Calu3 (cell line): ENCODE measurements at regions of chr1 and their contacts with region 1.

Region 1: GRCh38 chr1:158203693-158204457 is 23.2 kb downstream of the CD1D start:
- DNase-seq: peak; percentile 41
- H3K4me3 Mint-ChIP-seq: no peak overlapping the region
- H3K27ac Mint-ChIP-seq: no peak overlapping the region
- H3K4me1 Mint-ChIP-seq: peaks cover 22% of the 10 kb centered on the region
- H3K27me3 Mint-ChIP-seq: peaks cover 17% of the 10 kb centered on the region
- CTCF ChIP-seq: peak; percentile 64

Region 2: DNA sequence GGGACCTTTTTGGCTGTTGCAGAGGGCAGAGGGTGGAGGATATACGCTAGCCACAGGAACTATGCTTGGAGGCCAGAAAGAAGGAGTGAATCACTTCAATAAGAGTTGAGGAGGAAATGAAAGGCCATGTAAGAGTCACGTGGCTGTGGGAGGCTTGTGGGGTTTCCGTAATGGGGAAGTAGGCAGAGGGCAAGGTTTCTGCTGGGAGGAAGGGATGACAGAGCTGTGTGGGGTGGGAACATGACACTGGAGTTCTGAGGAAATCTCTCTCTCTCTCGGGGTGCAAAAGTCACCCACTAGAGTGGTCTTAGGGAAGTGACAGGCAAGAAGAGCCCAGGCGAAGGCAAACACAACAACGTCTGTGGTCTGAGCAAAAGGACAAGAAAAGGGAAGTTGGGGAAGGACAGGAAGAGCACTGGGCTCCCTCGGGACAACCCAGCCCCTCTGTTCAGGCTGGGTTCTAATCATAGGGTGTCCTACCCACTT is 81.9 kb after region 1 on chr1:
- CTCF ChIA-PET with region 1: no interaction called
- intact Hi-C with region 1: loop called (anchors 10 kb)
- DNase-seq: peak; percentile 20
- H3K4me3 Mint-ChIP-seq: no peak overlapping the region
- H3K27ac Mint-ChIP-seq: peak overlapping the region; percentile 20
- H3K4me1 Mint-ChIP-seq: peaks cover 8% of the 10 kb centered on the region
- H3K27me3 Mint-ChIP-seq: no peaks in the 10 kb centered on the region
- CTCF ChIP-seq: no peak

Region 3: DNA sequence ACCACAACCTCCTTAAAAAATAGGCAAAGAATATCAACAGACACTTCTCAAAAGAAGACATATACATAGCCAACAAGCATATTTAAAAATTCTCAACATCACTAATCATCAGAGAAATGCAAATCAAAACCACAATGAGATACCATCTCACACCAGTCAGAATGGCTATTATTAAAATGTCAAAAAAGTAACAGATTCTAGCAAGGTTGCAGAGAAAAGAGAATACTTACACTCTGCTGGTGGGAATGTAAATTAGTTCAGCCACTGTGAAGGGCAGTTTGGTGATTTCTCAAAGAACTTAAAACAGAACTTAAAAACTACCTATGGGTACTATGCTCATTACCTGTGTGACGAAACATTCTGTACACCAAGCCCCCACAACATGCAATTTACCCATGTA is 106.7 kb after region 1 on chr1:
- CTCF ChIA-PET with region 1: no interaction called
- intact Hi-C with region 1: no loop called
- DNase-seq: no peak
- H3K4me3 Mint-ChIP-seq: no peak overlapping the region
- H3K27ac Mint-ChIP-seq: no peak overlapping the region
- H3K4me1 Mint-ChIP-seq: no peaks in the 10 kb centered on the region
- H3K27me3 Mint-ChIP-seq: peaks cover 10% of the 10 kb centered on the region
- CTCF ChIP-seq: no peak

Region 4: GRCh38 chr1:158496374-158496773 is 292.5 kb after region 1 on chr1:
- CTCF ChIA-PET with region 1: interaction called, 11 read pairs
- intact Hi-C with region 1: loop called (anchors 2 kb)
- DNase-seq: no peak
- H3K4me3 Mint-ChIP-seq: no peak overlapping the region
- H3K27ac Mint-ChIP-seq: no peak overlapping the region
- H3K4me1 Mint-ChIP-seq: no peaks in the 10 kb centered on the region
- H3K27me3 Mint-ChIP-seq: peaks cover 15% of the 10 kb centered on the region
- CTCF ChIP-seq: no peak

Region 5: DNA sequence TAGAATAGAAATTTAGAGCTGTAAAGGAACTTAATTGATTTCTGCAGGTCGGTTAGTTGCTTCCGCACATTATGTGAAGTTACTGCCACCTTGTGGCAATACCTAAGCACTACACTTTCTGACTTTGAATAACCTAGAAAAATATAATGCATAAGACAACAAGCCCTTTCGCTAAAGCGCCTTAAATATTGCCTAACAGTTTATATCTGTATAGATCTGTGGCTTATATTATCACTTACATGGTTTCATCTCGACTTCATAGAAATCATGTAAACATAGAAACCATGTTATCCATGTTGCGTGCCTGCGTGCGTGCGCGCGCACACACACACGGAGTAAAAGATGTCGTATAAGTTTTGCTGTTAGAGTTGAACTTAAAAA is 794.9 kb after region 1 on chr1:
- CTCF ChIA-PET with region 1: interaction called, 7 read pairs
- intact Hi-C with region 1: loop called (anchors 2 kb)
- DNase-seq: peak; percentile 51
- H3K4me3 Mint-ChIP-seq: peak overlapping the region; percentile 63
- H3K27ac Mint-ChIP-seq: peak overlapping the region; percentile 38
- H3K4me1 Mint-ChIP-seq: peaks cover 29% of the 10 kb centered on the region
- H3K27me3 Mint-ChIP-seq: no peaks in the 10 kb centered on the region
- CTCF ChIP-seq: peak; percentile 83